AG04450 (cell line): ENCODE measurements at regions of chr6 and their contacts with region 1.

Region 1: DNA sequence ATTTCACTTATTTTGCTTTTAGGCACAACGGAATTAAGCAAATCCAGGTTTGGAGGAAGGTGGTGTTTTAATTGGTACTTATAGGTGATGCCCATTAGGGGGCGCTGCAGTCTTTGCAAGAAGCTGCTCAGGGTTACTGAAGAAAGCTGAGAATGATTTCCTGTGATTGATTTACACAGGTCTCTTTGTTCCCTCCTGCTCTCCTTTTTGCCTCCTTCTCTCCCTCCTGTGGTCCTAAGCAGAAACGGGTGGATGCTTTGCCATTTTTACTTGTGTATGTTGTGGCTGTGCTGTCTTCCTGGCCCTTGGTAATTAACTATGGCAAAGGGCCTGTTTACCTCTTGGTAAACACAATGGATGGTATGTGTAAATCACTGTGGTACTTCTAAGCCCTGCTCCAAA is 97.8 kb downstream of the ANKS1A start:
- DNase-seq: peak; percentile 65
- H3K4me3 ChIP-seq: no peak overlapping the region
- H3K27ac ChIP-seq: no peak overlapping the region
- H3K27me3 ChIP-seq: no peaks in the 10 kb centered on the region
- CTCF ChIP-seq: peak; percentile 72

Region 2: DNA sequence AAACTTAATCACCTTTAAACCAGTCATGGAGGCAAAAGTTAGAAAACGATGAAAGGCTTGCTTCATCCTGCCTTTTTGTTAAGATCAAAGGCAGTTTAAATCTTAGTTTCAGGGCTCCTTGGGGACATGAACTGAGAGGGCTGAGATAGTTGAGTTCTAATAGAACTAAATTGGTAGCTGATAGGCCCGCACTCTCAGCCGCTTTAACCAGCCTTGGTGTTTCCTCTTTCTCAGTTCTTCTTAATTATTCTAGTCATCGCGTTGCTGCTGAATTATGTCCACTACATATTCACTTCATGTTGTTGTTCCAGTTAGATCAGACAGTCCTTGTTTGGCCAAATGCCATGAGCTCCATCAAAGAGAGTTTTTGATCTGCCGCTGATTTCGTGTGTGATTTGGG is 25.3 kb before region 1 on chr6:
- CTCF ChIA-PET with region 1: interaction called, 10 read pairs
- POLR2A ChIA-PET with region 1: no interaction called
- DNase-seq: no peak
- H3K4me3 ChIP-seq: no peak overlapping the region
- H3K27ac ChIP-seq: no peak overlapping the region
- H3K27me3 ChIP-seq: no peaks in the 10 kb centered on the region
- CTCF ChIP-seq: no peak

Region 3: DNA sequence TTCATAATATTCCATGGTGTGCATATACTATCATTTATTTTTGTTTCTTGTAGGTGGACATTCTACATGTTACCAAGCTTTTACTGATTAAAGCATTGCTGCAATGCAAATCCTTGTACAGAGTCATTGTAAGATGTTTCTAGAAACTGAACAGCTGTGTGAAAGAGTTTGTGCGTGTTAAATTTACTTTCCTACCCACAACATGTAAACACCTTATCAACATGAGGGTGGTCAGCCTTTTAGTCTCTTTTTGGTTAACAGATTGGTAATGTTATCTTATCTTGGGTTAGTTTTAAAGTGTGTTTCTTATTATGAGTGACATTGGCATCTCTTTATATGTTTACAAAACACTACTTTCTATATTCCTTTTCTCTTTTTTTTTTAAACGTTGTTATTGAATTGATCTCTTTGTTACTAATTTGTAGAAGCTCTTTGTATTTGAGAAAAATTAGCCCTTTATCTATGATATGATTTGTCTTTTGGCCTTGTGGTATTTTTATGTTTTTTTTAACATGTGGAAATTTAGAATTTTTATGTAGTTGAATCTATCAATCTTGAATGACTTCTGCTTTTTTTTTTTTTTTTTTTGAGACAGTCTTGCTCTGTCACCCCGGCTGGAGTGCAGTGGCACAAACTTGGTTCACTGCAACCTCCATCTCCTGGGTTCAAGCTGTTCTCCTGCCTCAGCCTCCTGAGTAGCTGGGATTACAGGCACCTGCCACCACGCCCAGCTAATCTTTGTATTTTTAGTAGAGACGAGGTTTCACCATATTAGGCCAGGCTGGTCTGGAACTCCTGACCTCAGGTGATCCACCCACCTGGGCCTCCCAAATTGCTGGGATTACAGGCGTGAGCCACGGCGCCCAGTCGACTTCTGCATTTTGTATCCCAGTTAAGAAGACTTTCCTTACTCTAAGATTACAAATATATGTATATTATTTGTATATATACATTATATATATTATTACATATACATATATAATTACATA is 42.2 kb after region 1 on chr6:
- CTCF ChIA-PET with region 1: interaction called, 11 read pairs
- POLR2A ChIA-PET with region 1: no interaction called
- DNase-seq: no peak
- H3K4me3 ChIP-seq: no peak overlapping the region
- H3K27ac ChIP-seq: no peak overlapping the region
- H3K27me3 ChIP-seq: no peaks in the 10 kb centered on the region
- CTCF ChIP-seq: no peak

Region 4: DNA sequence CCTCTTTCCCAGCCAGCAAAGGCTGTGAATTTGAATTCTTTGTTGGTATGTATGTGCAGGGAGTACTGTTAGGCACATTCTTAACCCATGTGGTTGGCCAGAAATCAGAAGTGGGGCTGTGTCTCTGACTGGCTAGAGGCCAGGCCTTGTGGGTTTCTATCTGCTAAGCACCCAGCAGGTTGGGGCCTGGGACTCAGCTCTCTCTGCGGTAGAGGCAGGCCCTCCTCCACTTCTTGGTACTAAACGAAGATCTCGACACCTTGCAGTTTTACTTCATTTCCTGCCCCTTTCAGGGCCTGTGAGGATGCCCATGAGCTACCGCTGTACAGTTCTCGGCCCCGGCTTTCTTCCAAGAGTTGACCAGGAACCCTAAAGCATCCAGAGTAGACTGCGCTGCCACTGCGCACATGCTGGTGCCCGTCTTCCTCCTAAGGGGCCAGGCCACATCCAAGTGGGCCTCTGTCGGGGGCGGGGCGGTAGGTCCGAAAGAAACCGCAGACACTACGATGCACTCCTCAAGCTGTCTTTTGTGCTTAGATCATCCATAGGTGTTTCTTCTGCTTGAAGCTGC is 103.2 kb after region 1 on chr6:
- CTCF ChIA-PET with region 1: interaction called, 22 read pairs
- POLR2A ChIA-PET with region 1: no interaction called
- DNase-seq: peak; percentile 42
- H3K4me3 ChIP-seq: no peak overlapping the region
- H3K27ac ChIP-seq: peak overlapping the region; percentile 3
- H3K27me3 ChIP-seq: no peaks in the 10 kb centered on the region
- CTCF ChIP-seq: no peak

Region 5: DNA sequence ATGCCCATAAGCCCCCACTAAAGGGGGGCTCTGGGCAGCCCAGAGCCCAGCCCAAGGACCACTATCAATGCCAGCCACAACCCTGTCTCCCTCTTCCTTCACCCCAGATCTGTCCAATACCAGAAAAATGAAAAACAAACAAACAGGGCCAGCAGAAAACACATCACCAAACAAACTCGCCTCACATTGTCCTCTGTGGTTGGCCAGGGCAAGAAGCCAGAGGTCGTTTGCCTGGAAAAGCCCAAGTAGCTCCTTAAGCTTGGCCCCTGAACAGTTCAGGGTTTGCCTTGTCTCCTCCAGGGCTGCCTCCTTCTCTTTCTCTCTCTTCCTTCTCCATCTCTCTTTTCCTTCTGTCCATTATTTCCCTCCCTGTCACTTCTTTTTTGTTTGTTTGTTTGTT is 216.8 kb after region 1 on chr6:
- CTCF ChIA-PET with region 1: interaction called, 51 read pairs
- POLR2A ChIA-PET with region 1: no interaction called
- DNase-seq: no peak
- H3K4me3 ChIP-seq: no peak overlapping the region
- H3K27ac ChIP-seq: no peak overlapping the region
- H3K27me3 ChIP-seq: peaks cover 21% of the 10 kb centered on the region
- CTCF ChIP-seq: no peak